ENCODE measurements at regions of chr15 and their contacts with region 1.

Region 1: DNA sequence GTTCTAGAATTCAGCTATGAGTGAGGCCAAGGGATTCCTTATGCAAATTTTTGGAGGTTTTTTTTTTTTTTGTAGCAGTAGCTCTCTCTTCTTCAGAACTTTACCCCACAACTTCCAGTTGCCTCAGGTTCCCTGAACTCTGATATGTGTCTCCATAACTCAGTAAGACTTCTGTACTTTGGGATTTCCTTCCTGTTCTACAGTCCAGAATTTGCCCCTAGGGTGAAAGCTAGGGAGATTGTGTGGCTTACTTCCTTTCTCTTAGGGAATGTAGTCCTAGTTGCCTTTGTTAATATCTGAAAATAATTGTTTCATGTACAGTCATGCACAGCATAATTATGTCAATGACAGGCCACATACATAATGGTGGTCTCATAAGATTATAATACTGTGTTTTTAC is 30.8 kb downstream of the LRRC28 start:
- DNase-seq: no peak

Region 2: DNA sequence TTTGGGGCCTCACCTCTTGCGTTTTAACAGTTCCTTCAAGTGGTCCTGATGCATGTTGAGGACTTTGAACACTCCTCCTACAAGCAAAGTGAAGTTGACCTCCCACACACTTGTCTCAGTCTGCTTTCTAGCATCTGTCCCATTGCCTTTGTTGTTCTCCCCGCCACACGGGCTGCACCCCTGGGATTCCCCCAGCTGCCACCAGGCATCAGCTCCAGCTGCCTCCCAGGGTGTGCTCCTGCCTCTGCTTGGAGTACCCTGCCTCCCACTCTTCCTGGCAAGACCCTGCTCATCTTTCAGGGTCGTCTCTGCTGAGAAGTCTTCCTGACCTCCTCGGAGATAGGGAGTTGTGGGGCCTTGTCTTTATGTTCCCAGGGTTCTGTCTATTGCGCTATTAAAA is 581.6 kb before region 1 on chr15:
- intact Hi-C with region 1: no loop called
- DNase-seq: no peak

Region 3: GRCh38 chr15:99324082-99324620 is 42.0 kb after region 1 on chr15:
- intact Hi-C with region 1: no loop called
- DNase-seq: no peak

Region 4: GRCh38 chr15:99361541-99362185 is 79.5 kb after region 1 on chr15:
- intact Hi-C with region 1: loop called (anchors 5 kb)
- DNase-seq: no peak